ENCODE measurements at regions of chr4 and their contacts with region 1.

Region 1: DNA sequence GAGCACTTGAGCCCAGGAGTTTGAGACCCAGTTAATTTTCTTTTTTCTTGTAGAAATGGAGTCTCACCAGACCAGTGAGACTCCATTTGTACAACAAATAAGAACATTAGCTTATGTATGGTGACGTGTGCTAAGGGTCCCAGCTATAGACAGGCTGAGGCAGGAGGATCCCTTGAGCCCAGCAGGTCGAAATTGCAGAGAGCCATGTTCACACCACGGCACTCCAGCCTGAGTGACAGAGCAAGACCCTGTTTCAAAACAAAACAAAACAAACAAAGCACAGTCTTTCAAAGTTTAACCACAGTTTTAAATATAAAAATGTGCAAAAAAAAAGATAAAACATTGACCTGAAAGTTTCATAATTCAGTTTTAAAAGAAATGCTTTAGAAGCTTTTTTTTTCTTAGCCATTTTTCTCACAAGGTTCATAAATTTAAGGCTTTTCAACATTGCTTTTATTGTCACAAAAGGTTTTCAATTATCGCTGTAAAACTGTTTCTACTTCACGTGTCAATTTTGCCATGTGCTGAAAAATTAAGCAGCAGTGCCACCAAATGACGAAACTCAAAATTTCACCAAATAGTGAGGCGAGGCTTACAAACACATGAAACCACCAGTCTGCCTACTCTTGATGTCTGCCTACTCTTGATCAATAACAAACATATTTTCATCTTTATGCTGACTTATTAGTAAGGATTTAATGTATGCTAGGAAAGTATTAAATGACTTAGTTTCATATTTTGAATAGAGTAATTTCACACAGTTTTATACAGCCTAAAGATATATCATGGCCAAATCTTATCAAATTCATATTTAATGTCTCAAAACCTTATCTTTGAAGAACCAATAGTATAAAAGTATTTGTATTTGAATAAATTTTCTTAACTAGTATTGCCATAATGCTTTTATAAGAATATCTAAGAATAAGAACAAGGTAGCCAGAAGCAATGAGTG is 126.3 kb downstream of the NEK1 start:
- DNase-seq: peak in 2 of 5 donors; percentile 24 to 42
- H3K4me3 ChIP-seq: no peak overlapping the region
- H3K27ac ChIP-seq: no peak overlapping the region
- H3K4me1 ChIP-seq: no peaks in the 10 kb centered on the region
- H3K27me3 ChIP-seq: no peaks in the 10 kb centered on the region
- CTCF ChIP-seq: peak in 2 of 3 donors; percentile 52 to 66
- EP300 ChIP-seq: no peak
- POLR2A ChIP-seq: no peak

Region 2: GRCh38 chr4:168923526-168924194 is 562.4 kb before region 1 on chr4:
- intact Hi-C with region 1: loop called in 1 of 4 experiments (anchors 10 kb)
- DNase-seq: peak in 3 of 5 donors; percentile 38 to 66 (median 64)
- H3K4me3 ChIP-seq: no peak overlapping the region
- H3K27ac ChIP-seq: no peak overlapping the region
- H3K4me1 ChIP-seq: no peaks in the 10 kb centered on the region
- H3K27me3 ChIP-seq: no peaks in the 10 kb centered on the region
- CTCF ChIP-seq: peak; percentile 66 to 75 (median 70)
- EP300 ChIP-seq: no peak
- POLR2A ChIP-seq: no peak

Region 3: DNA sequence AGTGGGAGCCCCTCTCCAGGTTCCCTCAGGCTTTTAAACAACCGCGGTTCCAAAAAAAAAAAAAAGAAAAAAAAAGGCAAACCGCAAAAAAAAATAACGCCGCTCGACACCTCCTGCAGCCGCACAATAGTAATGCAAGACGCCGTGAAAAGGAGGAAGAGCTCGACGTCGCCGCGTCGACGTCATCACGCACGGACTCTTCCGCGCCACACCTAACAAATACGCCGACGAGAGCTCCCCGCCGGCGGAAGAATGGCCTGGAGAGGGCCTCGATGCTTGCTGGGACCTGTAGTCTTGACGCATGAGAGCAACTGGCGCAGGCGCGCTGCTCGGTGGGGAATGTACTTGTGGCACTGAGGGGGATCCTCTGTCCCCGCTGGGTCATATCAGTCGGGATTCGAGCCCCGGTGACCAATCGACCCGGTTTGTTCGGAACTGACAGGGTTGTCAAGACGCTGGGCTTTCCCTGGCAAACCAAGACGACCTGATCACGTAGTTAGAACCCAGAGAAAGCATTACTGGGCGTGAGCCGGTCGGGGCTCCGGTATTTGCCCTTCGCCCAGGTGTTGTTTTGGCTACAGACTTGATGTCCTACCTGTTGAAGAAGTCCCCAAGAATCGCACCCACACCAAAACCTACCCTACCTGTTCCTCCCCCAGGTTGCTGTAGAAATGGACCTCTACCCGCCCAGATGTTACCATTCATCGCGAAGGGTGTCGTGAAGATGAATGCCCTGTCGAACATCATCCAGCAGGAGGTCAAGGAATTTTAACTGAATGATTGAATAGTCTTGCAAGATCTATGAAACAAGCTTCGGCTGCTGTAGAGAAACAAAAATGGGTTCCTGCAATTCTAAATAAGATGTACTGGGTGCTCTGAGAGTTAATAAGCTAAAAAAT is 475.7 kb before region 1 on chr4 and contains the start of gene CBR4:
- intact Hi-C with region 1: loop called in 1 of 4 experiments (anchors 5 kb)
- DNase-seq: peak; percentile 96 to 97 (median 97)
- H3K4me3 ChIP-seq: peak within 1 kb of the TSS; percentile 70
- H3K27ac ChIP-seq: peak within 1 kb of the TSS; percentile 82 to 89
- H3K4me1 ChIP-seq: peaks cover 4% of the 10 kb centered on the region
- H3K27me3 ChIP-seq: no peaks in the 10 kb centered on the region
- CTCF ChIP-seq: peak in 2 of 3 donors; percentile 26 to 34
- EP300 ChIP-seq: no peak
- POLR2A ChIP-seq: peak; percentile 65
- total RNA-seq, gene CBR4: 17.5 to 24.0 (median 20.2) TPM

Region 4: DNA sequence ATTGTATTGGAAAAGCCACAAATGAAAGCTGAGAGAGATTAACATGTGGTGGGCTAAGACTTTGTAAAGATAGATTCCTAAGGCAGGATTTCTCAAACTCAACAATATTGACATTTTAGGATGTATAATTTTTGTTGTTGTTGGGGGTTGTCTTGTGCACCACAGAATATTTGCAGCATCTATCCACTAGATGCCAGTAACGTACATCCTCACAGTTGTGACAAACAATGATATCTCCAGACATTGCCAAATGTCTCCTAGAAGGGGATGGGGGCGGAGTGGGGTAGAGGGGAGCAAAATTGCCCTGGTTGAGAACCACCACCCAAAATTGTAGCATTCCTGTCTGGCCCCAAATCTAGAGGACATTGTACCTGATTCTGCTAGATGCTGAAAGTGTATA is 461.3 kb before region 1 on chr4:
- intact Hi-C with region 1: loop called in 2 of 4 experiments (anchors 10 kb)
- DNase-seq: no peak
- H3K4me3 ChIP-seq: no peak overlapping the region
- H3K27ac ChIP-seq: no peak overlapping the region
- H3K4me1 ChIP-seq: peaks cover 1% of the 10 kb centered on the region
- H3K27me3 ChIP-seq: no peaks in the 10 kb centered on the region
- CTCF ChIP-seq: peak in 2 of 3 donors; percentile 49 to 52
- EP300 ChIP-seq: no peak
- POLR2A ChIP-seq: no peak

Region 5: GRCh38 chr4:169612871-169613859 is 127.1 kb after region 1 on chr4:
- intact Hi-C with region 1: no loop called
- DNase-seq: peak; percentile 43 to 75 (median 63)
- H3K4me3 ChIP-seq: peak overlapping the region; percentile 93
- H3K27ac ChIP-seq: peak overlapping the region in 1 of 2 donors; percentile 94
- H3K4me1 ChIP-seq: no peaks in the 10 kb centered on the region
- H3K27me3 ChIP-seq: no peaks in the 10 kb centered on the region
- CTCF ChIP-seq: peak; percentile 14 to 45 (median 27)
- EP300 ChIP-seq: no peak
- POLR2A ChIP-seq: no peak

Measured in ovary (tissue), 10 donors.